ENCODE measurements at regions of chr3 and their contacts with region 1.

Region 1: GRCh38 chr3:128680602-128681368 is 30.2 kb upstream of the RPN1 start:
- DNase-seq: peak; percentile 100
- ATAC-seq: peak; percentile 98
- H3K4me3 Mint-ChIP-seq: peak overlapping the region; percentile 84
- H3K27ac Mint-ChIP-seq: peak overlapping the region; percentile 99
- H3K4me1 Mint-ChIP-seq: peaks cover 16% of the 10 kb centered on the region
- H3K27me3 Mint-ChIP-seq: peaks cover 46% of the 10 kb centered on the region
- CTCF ChIP-seq: peak; percentile 83

Region 2: DNA sequence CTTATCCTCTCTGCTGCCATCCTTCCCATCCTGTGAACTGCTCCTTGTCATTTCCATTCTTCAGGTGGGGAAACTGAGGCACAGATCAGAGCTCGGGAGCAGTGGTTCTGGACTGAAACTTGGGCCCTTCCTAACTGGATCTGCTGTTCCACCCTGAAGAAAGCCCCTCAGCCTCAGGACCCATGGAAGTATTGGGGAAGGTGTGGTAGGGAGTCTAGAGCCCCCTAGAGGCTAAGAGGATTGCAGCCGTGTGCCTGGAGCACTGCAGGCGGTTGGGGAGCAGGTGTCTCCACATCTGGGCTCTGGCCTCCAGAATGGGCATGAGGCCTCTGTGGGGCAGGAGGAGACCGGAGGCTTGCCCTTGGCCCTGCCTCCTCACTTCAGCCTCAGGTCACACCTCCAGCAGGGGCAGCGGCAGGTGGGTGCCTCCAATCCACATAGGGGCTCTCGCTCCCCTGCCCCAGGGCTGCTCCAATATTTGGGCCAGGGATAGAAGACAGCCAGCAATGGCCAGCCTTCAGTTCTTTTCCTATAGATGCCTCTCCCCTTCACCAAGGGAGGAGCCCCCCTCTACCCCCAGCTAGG is 242.2 kb before region 1 on chr3:
- CTCF ChIA-PET with region 1: no interaction called
- POLR2A ChIA-PET with region 1: no interaction called
- DNase-seq: peak; percentile 60
- ATAC-seq: peak; percentile 77
- H3K4me3 Mint-ChIP-seq: no peak overlapping the region
- H3K27ac Mint-ChIP-seq: no peak overlapping the region
- H3K4me1 Mint-ChIP-seq: peaks cover 29% of the 10 kb centered on the region
- H3K27me3 Mint-ChIP-seq: peaks cover 39% of the 10 kb centered on the region
- CTCF ChIP-seq: peak; percentile 43

Region 3: GRCh38 chr3:128617557-128618397 is 63.0 kb before region 1 on chr3:
- CTCF ChIA-PET with region 1: interaction called, 19 read pairs
- POLR2A ChIA-PET with region 1: interaction called, 5 read pairs
- DNase-seq: peak; percentile 98
- ATAC-seq: peak; percentile 91
- H3K4me3 Mint-ChIP-seq: peak overlapping the region; percentile 91
- H3K27ac Mint-ChIP-seq: peak overlapping the region; percentile 89
- H3K4me1 Mint-ChIP-seq: peaks cover 14% of the 10 kb centered on the region
- H3K27me3 Mint-ChIP-seq: no peaks in the 10 kb centered on the region
- CTCF ChIP-seq: peak; percentile 75; the same call in 1 of the 2 replicates

Region 4: GRCh38 chr3:128663151-128663550 is 17.6 kb before region 1 on chr3:
- CTCF ChIA-PET with region 1: interaction called, 28 read pairs
- POLR2A ChIA-PET with region 1: interaction called, 6 read pairs
- DNase-seq: no peak
- ATAC-seq: peak; percentile 67
- H3K4me3 Mint-ChIP-seq: no peak overlapping the region
- H3K27ac Mint-ChIP-seq: no peak overlapping the region
- H3K4me1 Mint-ChIP-seq: peaks cover 4% of the 10 kb centered on the region
- H3K27me3 Mint-ChIP-seq: peaks cover 16% of the 10 kb centered on the region
- CTCF ChIP-seq: no peak

Region 5: GRCh38 chr3:128725932-128726690 is 45.3 kb after region 1 on chr3 and contains the start of gene RAB7A:
- CTCF ChIA-PET with region 1: interaction called, 30 read pairs
- POLR2A ChIA-PET with region 1: interaction called, 7 read pairs
- DNase-seq: peak; percentile 96
- ATAC-seq: peak; percentile 91
- H3K4me3 Mint-ChIP-seq: peak within 1 kb of the TSS; percentile 92
- H3K27ac Mint-ChIP-seq: peak within 1 kb of the TSS; percentile 92
- H3K4me1 Mint-ChIP-seq: peaks cover 81% of the 10 kb centered on the region
- H3K27me3 Mint-ChIP-seq: no peaks in the 10 kb centered on the region
- CTCF ChIP-seq: no peak
- total RNA-seq, gene RAB7A: 166 to 184 TPM (median 184 TPM) in 3 replicates

Region 6: GRCh38 chr3:128767094-128767750 is 86.4 kb after region 1 on chr3:
- CTCF ChIA-PET with region 1: interaction called, 11 read pairs
- POLR2A ChIA-PET with region 1: no interaction called
- DNase-seq: no peak
- ATAC-seq: peak; percentile 39
- H3K4me3 Mint-ChIP-seq: no peak overlapping the region
- H3K27ac Mint-ChIP-seq: peak overlapping the region; percentile 78
- H3K4me1 Mint-ChIP-seq: peaks cover 47% of the 10 kb centered on the region
- H3K27me3 Mint-ChIP-seq: no peaks in the 10 kb centered on the region
- CTCF ChIP-seq: no peak

Region 7: GRCh38 chr3:128787256-128788240 is 106.8 kb after region 1 on chr3:
- CTCF ChIA-PET with region 1: interaction called, 28 read pairs
- POLR2A ChIA-PET with region 1: interaction called, 8 read pairs
- DNase-seq: peak; percentile 50
- ATAC-seq: peak; percentile 70
- H3K4me3 Mint-ChIP-seq: no peak overlapping the region
- H3K27ac Mint-ChIP-seq: no peak overlapping the region; the same call in 1 of the 2 replicates
- H3K4me1 Mint-ChIP-seq: peaks cover 56% of the 10 kb centered on the region
- H3K27me3 Mint-ChIP-seq: no peaks in the 10 kb centered on the region
- CTCF ChIP-seq: peak; percentile 58

Region 8: GRCh38 chr3:128845778-128846485 is 165.1 kb after region 1 on chr3:
- CTCF ChIA-PET with region 1: interaction called, 15 read pairs
- POLR2A ChIA-PET with region 1: no interaction called
- DNase-seq: peak; percentile 96
- ATAC-seq: peak; percentile 92
- H3K4me3 Mint-ChIP-seq: peak overlapping the region; percentile 60
- H3K27ac Mint-ChIP-seq: no peak overlapping the region; the same call in 1 of the 2 replicates
- H3K4me1 Mint-ChIP-seq: peaks cover 24% of the 10 kb centered on the region
- H3K27me3 Mint-ChIP-seq: peaks cover 12% of the 10 kb centered on the region
- CTCF ChIP-seq: peak; percentile 51; the same call in 1 of the 2 replicates

Region 9: DNA sequence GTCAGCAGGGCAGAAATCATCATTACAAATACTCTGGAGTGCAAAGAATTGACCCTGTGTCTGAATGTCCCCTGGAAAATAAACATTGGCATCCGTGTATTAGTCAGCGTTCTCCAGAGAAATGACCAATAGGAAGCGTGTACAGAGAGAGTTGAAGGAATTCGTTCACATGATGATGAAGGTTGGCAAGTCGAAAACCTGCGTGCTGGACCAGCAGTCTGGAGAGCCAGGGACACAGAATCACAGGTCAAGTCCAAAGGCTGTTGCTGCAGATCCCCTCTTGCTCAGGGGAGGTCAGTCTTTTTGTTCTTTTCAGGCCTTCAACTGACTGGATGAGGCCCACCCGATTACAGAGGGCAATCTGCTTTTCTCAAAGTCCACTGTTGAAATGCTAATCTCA is 396.4 kb after region 1 on chr3:
- CTCF ChIA-PET with region 1: no interaction called
- POLR2A ChIA-PET with region 1: no interaction called
- DNase-seq: no peak
- ATAC-seq: no peak
- H3K4me3 Mint-ChIP-seq: no peak overlapping the region
- H3K27ac Mint-ChIP-seq: no peak overlapping the region
- H3K4me1 Mint-ChIP-seq: no peaks in the 10 kb centered on the region
- H3K27me3 Mint-ChIP-seq: peaks cover 4% of the 10 kb centered on the region; the same call in 1 of the 2 replicates
- CTCF ChIP-seq: no peak